Right ventricle myocardium superior (tissue), 1 donor: ENCODE measurements at regions of chr18 and their contacts with region 1.

Region 1: GRCh38 chr18:59249205-59249774 is 24.0 kb downstream of the RAX start:
- DNase-seq: no peak
- ATAC-seq: peak; percentile 67

Region 2: GRCh38 chr18:59395226-59396110 is 146.2 kb after region 1 on chr18:
- intact Hi-C with region 1: loop called (anchors 5 kb)
- DNase-seq: no peak
- ATAC-seq: no peak